Activated T-helper 1 cell treated with anti-CD3 and anti-CD28 coated beads, Interleukin-12 subunit alpha, Interleukin-12 subunit beta, Interleukin-2, Interleukin-4 antibody, amounts not matched to agents 30 ng/mL and 10 ng/mL and 1 ng/mL, durations not matched to agents 14 hours and 24 hours and 36 hours (primary cell): ENCODE measurements at regions of chr20 and their contacts with region 1.

Region 1: GRCh38 chr20:3767427-3768341 is at the start of gene ADISSP:
- DNase-seq: peak; percentile 98
- H3K4me3 Mint-ChIP-seq: peak within 1 kb of the TSS; percentile 87
- H3K27ac Mint-ChIP-seq: peak within 1 kb of the TSS; percentile 92
- H3K4me1 Mint-ChIP-seq: peaks cover 20% of the 10 kb centered on the region
- H3K27me3 Mint-ChIP-seq: peaks cover 9% of the 10 kb centered on the region
- total RNA-seq, gene ADISSP: 55.5 and 64.6 TPM in 2 replicates

Region 2: DNA sequence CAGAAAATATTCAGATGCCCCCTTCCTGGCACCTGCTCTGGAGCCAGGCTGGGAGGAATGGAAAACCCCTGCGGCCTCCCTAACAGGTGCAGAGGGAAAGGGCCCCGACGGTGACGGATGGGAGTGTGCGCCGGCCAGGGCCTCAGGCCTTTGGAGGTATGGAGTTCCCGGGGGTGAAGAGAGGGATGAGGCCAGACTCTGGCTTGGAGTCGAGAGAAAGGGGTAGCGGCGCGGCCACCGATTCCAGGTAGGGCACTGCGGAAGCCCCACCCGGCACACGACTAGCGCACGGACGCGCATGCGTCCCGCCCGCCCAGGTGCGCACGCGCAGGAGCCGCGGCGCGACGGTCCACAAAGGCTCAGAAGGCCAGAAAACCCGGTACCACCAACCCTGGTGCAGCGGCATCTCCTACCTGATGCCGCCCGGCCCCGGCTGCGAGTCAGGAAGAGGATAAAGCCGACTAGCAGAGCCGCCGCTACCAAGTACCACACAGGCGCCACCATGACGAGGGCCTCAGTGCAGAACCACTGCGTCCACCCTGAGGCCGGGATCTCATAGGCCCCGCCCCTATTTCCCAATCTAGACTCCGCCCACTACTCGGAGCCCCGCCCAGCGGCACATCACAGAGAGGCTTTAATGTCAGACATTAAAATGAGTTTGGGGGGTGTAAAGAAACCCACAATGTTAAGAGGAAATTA is 563.4 kb before region 1 on chr20 and contains the start of gene DDRGK1:
- intact Hi-C with region 1: loop called (anchors 1 kb)
- DNase-seq: peak; percentile 86
- H3K4me3 Mint-ChIP-seq: peak within 1 kb of the TSS; percentile 96
- H3K27ac Mint-ChIP-seq: peak within 1 kb of the TSS; percentile 97
- H3K4me1 Mint-ChIP-seq: peaks cover 23% of the 10 kb centered on the region
- H3K27me3 Mint-ChIP-seq: no peaks in the 10 kb centered on the region
- total RNA-seq, gene DDRGK1: 67.5 and 72.3 TPM in 2 replicates

Region 3: GRCh38 chr20:3744806-3745685 is 22.6 kb before region 1 on chr20:
- intact Hi-C with region 1: loop called (anchors 1 kb)
- DNase-seq: peak; percentile 59
- H3K4me3 Mint-ChIP-seq: peak overlapping the region; percentile 63
- H3K27ac Mint-ChIP-seq: no peak overlapping the region
- H3K4me1 Mint-ChIP-seq: peaks cover 13% of the 10 kb centered on the region
- H3K27me3 Mint-ChIP-seq: peaks cover 15% of the 10 kb centered on the region

Region 4: DNA sequence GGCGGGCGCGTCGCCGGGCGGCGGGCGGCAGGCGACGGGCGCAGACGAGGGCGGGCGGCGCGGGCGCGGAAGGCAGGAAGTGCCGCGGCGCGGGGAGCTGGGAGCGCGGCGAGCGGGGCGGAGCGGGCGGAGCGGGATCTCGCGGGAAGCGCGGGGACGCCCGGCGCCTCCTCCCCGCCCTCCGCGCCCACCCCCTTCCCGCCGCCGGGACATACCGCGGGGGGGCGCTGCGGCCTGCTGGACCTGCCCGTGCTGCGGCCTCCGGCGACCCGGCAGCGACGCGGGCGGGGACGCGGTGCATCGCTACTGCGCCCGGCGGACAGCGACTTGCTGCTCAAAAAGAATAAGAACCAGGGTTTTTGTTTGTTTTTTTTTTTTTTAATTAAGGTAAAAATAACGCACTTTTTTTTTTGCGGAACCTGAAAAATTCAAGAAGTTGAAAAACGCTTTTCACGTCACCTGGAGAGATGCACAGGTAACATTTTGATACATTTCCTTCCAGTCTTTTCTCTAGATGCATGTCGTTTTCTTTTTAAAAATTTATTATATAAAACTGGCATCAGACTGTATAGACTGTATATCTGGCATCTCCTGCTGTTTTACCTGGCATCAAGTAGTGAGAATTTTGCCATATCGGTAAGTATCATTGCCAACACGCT is 19.1 kb after region 1 on chr20 and contains the start of gene CENPB:
- intact Hi-C with region 1: loop called (anchors 1 kb)
- DNase-seq: peak; percentile 88
- H3K4me3 Mint-ChIP-seq: peak within 1 kb of the TSS; percentile 86
- H3K27ac Mint-ChIP-seq: peak within 1 kb of the TSS; percentile 70
- H3K4me1 Mint-ChIP-seq: peaks cover 39% of the 10 kb centered on the region
- H3K27me3 Mint-ChIP-seq: no peaks in the 10 kb centered on the region
- total RNA-seq, gene CENPB: 72.3 and 80.2 TPM in 2 replicates

Region 5: GRCh38 chr20:3820048-3820900 is 52.6 kb after region 1 on chr20 and contains the start of gene AP5S1:
- intact Hi-C with region 1: loop called (anchors 1 kb)
- DNase-seq: peak; percentile 90
- H3K4me3 Mint-ChIP-seq: peak within 1 kb of the TSS; percentile 85
- H3K27ac Mint-ChIP-seq: peak within 1 kb of the TSS; percentile 89
- H3K4me1 Mint-ChIP-seq: peaks cover 42% of the 10 kb centered on the region
- H3K27me3 Mint-ChIP-seq: no peaks in the 10 kb centered on the region
- total RNA-seq, gene AP5S1: 14.9 and 15.0 TPM in 2 replicates

Region 6: DNA sequence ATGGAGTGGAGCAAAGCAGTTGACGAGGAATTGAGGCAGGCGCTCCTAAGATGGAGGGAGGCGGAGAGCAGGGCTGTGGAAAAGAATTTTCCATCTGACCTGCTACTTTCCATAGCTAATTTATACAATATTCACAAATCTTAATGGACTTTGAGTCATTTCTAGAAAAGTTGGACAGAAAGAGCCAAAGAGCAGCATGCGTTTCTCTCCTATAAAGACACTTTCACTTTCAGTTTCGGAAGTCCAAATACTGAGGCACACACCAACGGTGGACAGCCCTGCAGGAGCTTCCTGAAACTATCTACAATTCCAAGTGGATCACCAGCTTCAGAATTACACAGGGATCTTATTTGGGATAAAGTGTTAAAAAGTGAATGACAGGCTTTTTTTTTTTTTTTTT is 165.0 kb after region 1 on chr20:
- intact Hi-C with region 1: no loop called
- DNase-seq: no peak
- H3K4me3 Mint-ChIP-seq: peak overlapping the region; percentile 26
- H3K27ac Mint-ChIP-seq: peak overlapping the region; percentile 44
- H3K4me1 Mint-ChIP-seq: peaks cover 30% of the 10 kb centered on the region
- H3K27me3 Mint-ChIP-seq: no peaks in the 10 kb centered on the region

Region 7: GRCh38 chr20:4014031-4014474 is 246.4 kb after region 1 on chr20:
- intact Hi-C with region 1: loop called (anchors 2 kb)
- DNase-seq: no peak
- H3K4me3 Mint-ChIP-seq: peak overlapping the region; percentile 87
- H3K27ac Mint-ChIP-seq: peak overlapping the region; percentile 78
- H3K4me1 Mint-ChIP-seq: peaks cover 57% of the 10 kb centered on the region
- H3K27me3 Mint-ChIP-seq: peaks cover 4% of the 10 kb centered on the region